ENCODE measurements at regions of chr1 and their contacts with region 1.

Region 1: DNA sequence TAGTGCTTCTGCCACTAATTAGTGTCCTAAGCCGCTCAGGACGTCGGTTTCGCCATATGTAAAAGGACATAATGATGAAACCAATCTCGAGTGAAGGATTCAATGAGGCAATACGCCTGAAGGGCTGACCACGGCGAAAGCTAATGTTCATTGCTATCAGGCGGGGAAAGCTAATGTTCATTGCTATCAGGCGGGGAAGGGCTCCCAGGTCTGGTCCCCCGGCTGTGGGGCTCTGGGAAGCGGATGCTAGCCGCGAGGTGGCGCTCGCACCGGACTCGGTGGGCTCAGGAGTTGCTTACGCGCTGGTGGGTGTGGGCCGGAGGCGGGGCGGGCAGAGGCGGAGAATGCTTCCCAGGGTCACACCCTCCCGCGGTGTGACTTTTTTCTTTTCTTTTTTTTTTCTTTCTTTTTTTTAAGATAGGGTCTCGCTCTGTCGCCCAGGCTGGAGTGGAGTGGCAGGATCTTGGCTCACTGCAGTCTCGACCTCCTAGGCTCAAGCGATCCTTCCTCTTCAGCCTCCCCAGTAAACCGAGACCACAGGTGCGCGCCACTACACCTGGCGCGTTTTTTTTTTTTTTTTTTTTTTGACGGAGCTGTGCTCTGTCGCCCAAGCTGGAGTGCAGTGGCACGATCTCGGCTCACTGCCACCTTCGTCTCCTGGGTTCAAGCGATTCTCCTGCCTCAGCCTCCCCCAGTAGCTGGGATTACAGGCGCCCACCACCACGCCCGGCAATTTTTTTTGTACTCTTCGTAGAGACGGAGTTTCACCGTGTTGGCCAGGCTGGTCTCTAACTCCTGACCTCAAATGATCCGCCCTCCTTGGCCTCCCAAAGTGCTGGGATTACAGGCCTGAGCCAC is 1.1 kb upstream of the PEAR1 start:
- DNase-seq: peak; percentile 92
- H3K4me3 Mint-ChIP-seq: peak overlapping the region; percentile 48
- H3K27ac Mint-ChIP-seq: no peak overlapping the region
- H3K4me1 Mint-ChIP-seq: peaks cover 10% of the 10 kb centered on the region
- H3K27me3 Mint-ChIP-seq: peaks cover 46% of the 10 kb centered on the region

Region 2: DNA sequence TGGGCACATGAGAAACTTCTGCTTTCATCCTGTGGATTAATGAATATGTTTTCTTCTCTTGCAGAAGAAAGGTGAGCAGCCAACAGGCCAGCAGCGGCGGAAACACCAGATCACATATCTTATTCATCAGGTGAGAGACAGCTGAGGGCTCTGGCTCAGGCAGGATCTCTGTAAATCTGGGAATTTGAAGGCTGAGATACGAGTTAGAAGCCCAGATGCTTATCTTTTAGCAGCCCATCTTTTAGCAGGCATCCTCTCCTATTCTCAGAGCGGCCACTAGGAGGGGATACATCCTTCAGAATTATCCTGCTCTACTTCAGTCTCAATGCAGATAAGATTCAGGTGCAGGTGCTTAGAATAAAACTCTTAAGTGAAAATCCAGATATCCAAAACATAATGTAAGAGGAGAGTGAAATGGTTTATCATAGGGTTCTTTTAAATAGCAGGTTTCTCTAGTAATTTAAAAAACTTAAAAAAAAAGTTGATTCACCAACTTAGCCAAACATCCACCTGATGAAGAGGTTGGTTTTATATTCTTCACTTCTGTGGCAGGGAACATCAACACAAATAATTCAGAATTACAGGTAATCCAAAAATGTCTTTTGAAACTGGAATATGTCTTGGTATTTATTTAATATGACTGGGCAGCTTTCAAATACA is 95.1 kb before region 1 on chr1:
- CTCF ChIA-PET with region 1: interaction called, 89 read pairs
- POLR2A ChIA-PET with region 1: no interaction called
- intact Hi-C with region 1: loop called (anchors 1 kb)
- DNase-seq: peak; percentile 71
- H3K4me3 Mint-ChIP-seq: no peak overlapping the region
- H3K27ac Mint-ChIP-seq: no peak overlapping the region
- H3K4me1 Mint-ChIP-seq: peaks cover 21% of the 10 kb centered on the region
- H3K27me3 Mint-ChIP-seq: no peaks in the 10 kb centered on the region

Region 3: GRCh38 chr1:156852418-156852874 is 40.0 kb before region 1 on chr1:
- CTCF ChIA-PET with region 1: interaction called, 10 read pairs
- POLR2A ChIA-PET with region 1: interaction called, 3 read pairs
- intact Hi-C with region 1: no loop called
- DNase-seq: no peak
- H3K4me3 Mint-ChIP-seq: no peak overlapping the region
- H3K27ac Mint-ChIP-seq: no peak overlapping the region
- H3K4me1 Mint-ChIP-seq: peaks cover 9% of the 10 kb centered on the region
- H3K27me3 Mint-ChIP-seq: peaks cover 11% of the 10 kb centered on the region

Region 4: GRCh38 chr1:156920233-156921052 is 28.0 kb after region 1 on chr1 and contains the start of gene LRRC71:
- CTCF ChIA-PET with region 1: interaction called, 132 read pairs
- POLR2A ChIA-PET with region 1: no interaction called
- intact Hi-C with region 1: loop called (anchors 2 kb)
- DNase-seq: peak; percentile 79
- H3K4me3 Mint-ChIP-seq: no peak within 1 kb of the TSS
- H3K27ac Mint-ChIP-seq: no peak within 1 kb of the TSS
- H3K4me1 Mint-ChIP-seq: peaks cover 8% of the 10 kb centered on the region
- H3K27me3 Mint-ChIP-seq: peaks cover 66% of the 10 kb centered on the region
- total RNA-seq, gene LRRC71: not detected

Region 5: GRCh38 chr1:156927215-156928042 is 35.0 kb after region 1 on chr1:
- CTCF ChIA-PET with region 1: interaction called, 132 read pairs
- POLR2A ChIA-PET with region 1: no interaction called
- intact Hi-C with region 1: no loop called
- DNase-seq: peak; percentile 79
- H3K4me3 Mint-ChIP-seq: no peak overlapping the region
- H3K27ac Mint-ChIP-seq: no peak overlapping the region
- H3K4me1 Mint-ChIP-seq: peaks cover 16% of the 10 kb centered on the region
- H3K27me3 Mint-ChIP-seq: peaks cover 75% of the 10 kb centered on the region

Region 6: DNA sequence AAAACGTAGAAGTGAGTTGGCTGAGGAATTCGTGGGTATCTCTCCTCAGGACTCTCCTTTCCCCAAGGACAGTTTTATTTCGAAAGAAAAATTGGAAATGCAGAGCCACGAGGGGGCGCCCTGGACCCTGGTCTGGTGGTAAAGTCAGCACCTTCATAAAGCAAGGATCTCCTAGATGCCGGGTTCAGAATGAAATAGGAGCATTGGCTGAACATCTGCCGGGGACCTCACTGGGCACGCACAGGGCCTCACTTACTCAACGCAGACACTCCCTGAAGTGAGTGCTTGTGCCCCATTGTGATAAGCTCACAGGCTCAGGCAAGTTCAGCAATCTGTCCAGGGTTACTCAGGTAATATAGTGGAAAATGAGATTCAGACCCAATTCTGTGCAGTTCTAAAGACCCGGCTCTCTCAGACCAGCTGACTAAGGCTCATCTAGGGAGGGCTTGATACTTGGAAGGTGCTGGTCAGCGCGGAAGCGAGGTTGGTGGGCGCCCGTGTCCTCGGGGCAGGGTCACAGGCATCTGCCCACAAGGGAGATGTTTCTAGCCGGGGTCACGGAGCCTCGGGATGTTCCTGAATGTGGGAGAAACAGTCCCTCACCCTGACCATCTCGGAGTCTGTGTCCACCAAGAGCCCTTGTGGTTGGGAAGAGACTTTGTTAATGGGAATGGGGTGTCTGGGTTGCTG is 301.4 kb after region 1 on chr1:
- CTCF ChIA-PET with region 1: no interaction called
- POLR2A ChIA-PET with region 1: no interaction called
- intact Hi-C with region 1: no loop called
- DNase-seq: peak; percentile 74
- H3K4me3 Mint-ChIP-seq: no peak overlapping the region
- H3K27ac Mint-ChIP-seq: no peak overlapping the region
- H3K4me1 Mint-ChIP-seq: peaks cover 3% of the 10 kb centered on the region
- H3K27me3 Mint-ChIP-seq: peaks cover 27% of the 10 kb centered on the region

Measured in activated CD4-positive, alpha-beta memory T cell treated with anti-CD3 and anti-CD28 coated beads for 36 hours (primary cell).